HEK293 (cell line): ENCODE measurements at regions of chr17 and their contacts with region 1.

Region 1: GRCh38 chr17:36601303-36602029 is at the start of gene MRM1:
- H3K4me3 ChIP-seq: peak within 1 kb of the TSS; percentile 88
- H3K27ac ChIP-seq: peak within 1 kb of the TSS; percentile 56
- H3K4me1 ChIP-seq: peaks cover 9% of the 10 kb centered on the region; the same call in 1 of the 2 replicates
- CTCF ChIP-seq: peak; percentile 61; the same call in 1 of the 2 replicates

Region 2: DNA sequence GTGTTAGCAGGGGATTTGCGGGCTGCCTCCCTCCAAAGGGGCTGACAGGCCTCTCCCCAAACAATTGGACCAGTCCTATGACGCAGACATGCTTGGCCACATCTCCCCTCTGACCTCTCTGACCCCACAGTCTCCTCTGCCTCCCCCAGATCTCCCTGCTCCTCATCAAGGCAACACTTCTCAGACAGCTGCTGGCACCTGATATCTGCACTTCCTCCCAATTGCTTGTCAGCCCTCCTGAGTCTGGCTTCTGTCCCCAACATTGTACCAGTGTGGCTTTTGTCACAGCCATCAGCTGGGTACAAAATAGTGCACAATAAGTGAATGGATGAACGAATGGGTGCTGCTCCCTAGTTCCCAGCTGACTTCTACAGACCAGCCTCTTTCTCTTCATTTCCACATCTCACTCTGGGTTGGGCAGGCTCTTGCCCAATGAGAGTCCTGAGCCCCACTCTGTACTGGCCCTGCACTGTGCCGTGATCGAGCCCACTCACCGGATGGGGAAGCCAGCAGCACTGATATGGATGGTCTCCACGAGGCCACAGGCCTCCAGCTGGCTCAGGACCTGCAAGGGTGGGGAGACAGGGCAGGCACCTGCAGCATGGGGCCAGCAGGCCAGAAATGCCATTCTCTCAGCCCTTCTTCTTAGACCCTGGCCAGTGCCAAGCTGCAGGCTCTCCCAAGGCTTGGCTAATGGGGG is 97.9 kb before region 1 on chr17:
- CTCF ChIA-PET with region 1: no interaction called
- POLR2A ChIA-PET with region 1: no interaction called
- H3K4me3 ChIP-seq: no peak overlapping the region
- H3K27ac ChIP-seq: no peak overlapping the region
- H3K4me1 ChIP-seq: no peaks in the 10 kb centered on the region
- CTCF ChIP-seq: no peak

Region 3: GRCh38 chr17:36545465-36546417 is 55.7 kb before region 1 on chr17:
- CTCF ChIA-PET with region 1: no interaction called
- POLR2A ChIA-PET with region 1: interaction called, 42 read pairs
- H3K4me3 ChIP-seq: peak overlapping the region; percentile 99
- H3K27ac ChIP-seq: peak overlapping the region; percentile 96
- H3K4me1 ChIP-seq: peaks cover 11% of the 10 kb centered on the region
- CTCF ChIP-seq: peak; percentile 70

Region 4: DNA sequence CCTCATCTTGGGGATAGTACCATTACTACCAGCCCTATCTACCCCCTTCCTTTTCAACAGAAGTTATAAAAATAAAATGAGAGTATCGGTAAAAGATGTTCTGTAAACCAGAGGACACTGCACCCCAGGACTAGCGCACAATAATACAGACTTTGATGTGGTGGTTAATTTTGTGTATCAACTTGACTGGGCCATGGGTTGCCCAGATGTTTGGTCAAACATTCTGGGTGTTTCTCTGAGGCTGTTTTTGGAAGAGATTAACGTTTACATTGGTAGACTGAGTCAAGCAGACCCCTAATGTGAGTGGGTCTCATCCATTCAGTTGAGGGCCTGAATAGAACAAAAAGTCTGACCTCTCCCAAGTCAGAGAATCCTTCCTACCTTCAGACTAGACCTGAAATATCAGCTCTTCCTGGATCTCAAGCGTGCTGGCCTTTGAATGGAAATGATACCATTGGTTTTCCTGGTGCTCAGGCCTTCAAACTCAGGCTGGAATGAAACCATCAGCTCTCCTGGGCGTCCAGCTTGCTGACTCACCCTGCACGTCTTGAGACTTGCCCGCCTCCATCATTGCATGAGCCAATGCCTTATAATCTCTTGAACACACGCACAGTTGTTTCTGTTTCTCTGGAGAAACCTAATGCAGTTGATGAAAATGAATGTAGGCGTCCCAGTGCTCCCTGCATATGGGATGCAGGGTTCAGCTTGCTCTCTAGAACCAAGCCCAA is 10.0 kb after region 1 on chr17:
- CTCF ChIA-PET with region 1: interaction called, 18 read pairs
- POLR2A ChIA-PET with region 1: interaction called, 7 read pairs
- H3K4me3 ChIP-seq: no peak overlapping the region
- H3K27ac ChIP-seq: no peak overlapping the region
- H3K4me1 ChIP-seq: no peaks in the 10 kb centered on the region; the same call in 1 of the 2 replicates
- CTCF ChIP-seq: no peak

Region 5: DNA sequence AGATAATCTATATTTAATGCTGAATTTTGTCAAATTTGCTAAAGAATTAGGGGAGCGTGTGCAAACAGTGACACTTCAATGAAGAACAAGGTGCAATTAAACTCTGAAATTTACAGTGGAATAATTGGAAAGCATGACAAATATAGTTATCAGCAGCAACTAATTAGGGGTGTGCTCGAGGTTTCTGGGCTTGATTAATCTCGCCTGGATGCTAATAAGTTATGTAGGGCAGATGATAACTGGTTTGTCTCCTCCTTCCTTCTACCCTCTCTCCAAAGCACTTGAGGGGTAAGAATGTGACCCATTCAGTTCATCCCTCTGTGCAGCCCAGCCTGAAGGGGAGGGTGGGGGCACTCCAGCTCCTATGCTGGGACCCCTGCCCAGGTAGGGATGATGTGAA is 21.8 kb after region 1 on chr17:
- CTCF ChIA-PET with region 1: interaction called, 45 read pairs
- POLR2A ChIA-PET with region 1: interaction called, 5 read pairs
- H3K4me3 ChIP-seq: no peak overlapping the region
- H3K27ac ChIP-seq: no peak overlapping the region
- H3K4me1 ChIP-seq: no peaks in the 10 kb centered on the region
- CTCF ChIP-seq: no peak

Region 6: DNA sequence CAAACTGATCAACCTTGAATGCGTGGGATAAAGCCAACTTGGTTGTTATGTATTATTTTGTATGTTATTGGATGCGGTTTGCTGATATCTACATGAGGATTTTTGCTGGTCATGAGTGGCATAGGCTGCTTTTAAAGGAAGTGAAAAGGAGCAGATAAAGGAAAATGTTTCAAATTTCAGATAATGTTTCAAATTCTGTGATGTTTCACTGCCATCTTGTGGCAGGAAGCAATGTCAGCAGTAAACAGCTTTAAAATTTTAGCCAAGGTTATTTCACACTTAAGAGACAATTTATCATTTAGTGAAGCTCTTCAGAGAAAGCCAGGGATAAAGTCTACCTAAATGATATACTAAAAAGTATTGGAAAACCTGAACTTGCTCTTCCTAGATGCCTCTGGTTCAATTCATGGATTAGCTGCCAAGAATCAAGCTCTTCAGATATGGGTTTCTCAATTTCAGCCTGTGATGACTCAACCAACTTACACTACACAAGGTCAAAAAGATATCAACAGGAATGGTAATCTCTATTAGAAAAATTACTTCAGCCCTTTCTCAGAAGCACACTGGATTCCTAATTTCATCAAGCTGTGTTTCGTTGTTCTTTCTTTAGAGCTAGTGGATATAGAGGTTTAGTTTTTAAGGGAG is 638.3 kb after region 1 on chr17:
- CTCF ChIA-PET with region 1: interaction called, 29 read pairs
- POLR2A ChIA-PET with region 1: interaction called, 4 read pairs
- H3K4me3 ChIP-seq: no peak overlapping the region
- H3K27ac ChIP-seq: no peak overlapping the region
- H3K4me1 ChIP-seq: no peaks in the 10 kb centered on the region
- CTCF ChIP-seq: 0 out of 2 replicates have a peak, but pooled peaks have one; percentile 38